A673 (cell line): ENCODE measurements at regions of chr17 and their contacts with region 1.

Region 1: DNA sequence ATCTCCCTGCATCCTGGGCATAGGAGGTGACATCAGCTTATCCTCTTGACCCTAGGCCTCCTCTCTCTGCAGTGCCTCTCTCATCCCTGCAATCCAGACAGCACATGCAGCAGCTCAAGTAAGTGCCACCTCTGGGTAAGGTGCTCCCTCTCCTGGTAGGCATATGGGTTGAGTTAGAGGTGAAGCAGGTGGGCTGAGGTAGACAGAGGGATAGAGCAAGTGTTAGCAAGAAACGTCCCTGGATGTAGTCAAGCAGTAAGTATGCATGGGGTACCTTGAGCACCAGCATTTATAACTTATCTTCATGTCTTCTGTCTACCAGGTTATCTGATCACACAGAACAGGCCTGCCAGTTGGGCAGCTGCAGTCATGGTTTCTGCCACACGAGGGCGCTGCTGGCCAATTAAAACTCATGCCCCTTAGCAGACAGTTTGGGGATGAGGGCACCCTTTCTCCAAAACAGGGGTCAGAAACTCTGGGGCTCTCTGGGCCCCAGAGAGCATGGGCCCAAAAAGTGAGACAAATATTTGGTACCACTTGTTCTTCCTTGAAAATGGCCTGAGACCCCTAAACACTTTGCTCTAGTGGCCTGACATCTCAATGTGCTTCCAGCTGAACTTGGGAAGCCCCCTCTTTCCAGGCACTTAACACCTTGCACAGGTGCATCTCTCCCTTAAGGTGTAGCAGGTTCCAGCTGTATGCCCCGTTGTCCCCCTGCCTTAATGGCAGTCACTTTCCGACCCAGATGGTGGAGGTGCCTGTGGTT is 59.8 kb downstream of the NEUROD2 start:
- DNase-seq: peak; percentile 46
- H3K4me3 ChIP-seq: no peak overlapping the region
- H3K27ac ChIP-seq: no peak overlapping the region
- H3K4me1 ChIP-seq: no peaks in the 10 kb centered on the region
- H3K27me3 ChIP-seq: no peaks in the 10 kb centered on the region
- CTCF ChIP-seq: peak; percentile 80

Region 2: GRCh38 chr17:39576187-39576586 is 28.3 kb after region 1 on chr17:
- CTCF ChIA-PET with region 1: no interaction called
- POLR2A ChIA-PET with region 1: no interaction called
- intact Hi-C with region 1: loop called (anchors 1 kb)
- DNase-seq: peak; percentile 48
- H3K4me3 ChIP-seq: no peak overlapping the region
- H3K27ac ChIP-seq: no peak overlapping the region
- H3K4me1 ChIP-seq: no peaks in the 10 kb centered on the region
- H3K27me3 ChIP-seq: no peaks in the 10 kb centered on the region
- CTCF ChIP-seq: peak; percentile 67

Region 3: GRCh38 chr17:39621523-39622379 is 73.9 kb after region 1 on chr17:
- CTCF ChIA-PET with region 1: interaction called, 5 read pairs
- POLR2A ChIA-PET with region 1: no interaction called
- intact Hi-C with region 1: loop called (anchors 1 kb)
- DNase-seq: peak; percentile 76
- H3K4me3 ChIP-seq: no peak overlapping the region
- H3K27ac ChIP-seq: no peak overlapping the region
- H3K4me1 ChIP-seq: peaks cover 6% of the 10 kb centered on the region
- H3K27me3 ChIP-seq: no peaks in the 10 kb centered on the region
- CTCF ChIP-seq: peak; percentile 98